Activated CD8-positive, alpha-beta T cell treated with anti-CD3 and anti-CD28 coated beads for 36 hours (primary cell): ENCODE measurements at regions of chr15 and their contacts with region 1.

Region 1: GRCh38 chr15:67254238-67255175 is at the starts of genes AAGAB and IQCH:
- DNase-seq: peak; percentile 97
- ATAC-seq: peak; percentile 96
- H3K4me3 Mint-ChIP-seq: peak within 1 kb of the TSS; percentile 96
- H3K27ac Mint-ChIP-seq: peak within 1 kb of the TSS; percentile 97
- H3K4me1 Mint-ChIP-seq: peaks cover 29% of the 10 kb centered on the region
- H3K27me3 Mint-ChIP-seq: peaks cover 2% of the 10 kb centered on the region
- CTCF ChIP-seq: no peak
- total RNA-seq, gene AAGAB: 42.6 to 51.2 TPM
- total RNA-seq, gene IQCH: 1.2 to 1.7 TPM

Region 2: DNA sequence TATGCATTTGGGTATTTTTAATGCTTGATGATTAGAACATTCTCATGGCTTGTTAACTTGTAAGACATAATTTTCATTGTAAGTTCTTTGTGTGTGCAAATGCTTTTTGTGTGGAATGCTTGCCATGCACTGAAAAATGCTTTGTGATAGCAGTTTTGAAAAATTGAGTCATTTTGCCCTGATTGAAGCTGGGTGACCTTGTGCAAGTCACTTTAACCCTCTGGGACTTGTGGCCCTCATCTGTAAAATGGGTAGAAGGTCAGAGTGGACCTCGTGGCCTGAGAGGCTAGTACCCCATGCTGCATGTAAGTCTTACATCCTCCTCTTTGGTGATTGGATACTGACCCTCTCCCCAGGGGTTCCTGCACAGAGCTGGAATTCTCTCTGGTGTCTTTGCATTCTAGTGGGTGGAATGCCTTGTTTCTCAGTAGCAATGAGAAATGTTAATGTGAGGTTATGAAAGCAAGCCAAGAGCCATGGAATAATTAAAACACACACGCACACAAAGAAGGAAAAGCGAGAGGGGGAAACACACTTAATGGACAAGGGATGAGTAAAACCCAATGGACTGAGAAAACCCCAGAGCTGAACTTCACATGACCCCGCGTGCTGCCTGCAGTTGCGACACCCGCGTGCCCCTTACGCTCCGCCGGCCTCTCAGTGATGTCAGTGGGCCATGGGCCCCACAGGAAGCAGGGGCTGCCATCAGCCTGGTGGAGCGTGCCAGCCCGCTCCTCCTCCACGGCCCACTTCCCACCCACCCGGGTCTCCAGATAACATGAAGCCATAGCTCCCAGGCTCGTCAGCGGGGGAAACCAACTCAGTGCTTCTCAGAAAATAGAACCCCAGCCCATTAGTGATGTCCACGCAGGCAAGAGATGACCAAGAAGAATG is 145.1 kb before region 1 on chr15:
- CTCF ChIA-PET with region 1: no interaction called
- POLR2A ChIA-PET with region 1: no interaction called
- intact Hi-C with region 1: loop called (anchors 10 kb)
- DNase-seq: peak; percentile 49
- ATAC-seq: peak; percentile 29
- H3K4me3 Mint-ChIP-seq: no peak overlapping the region
- H3K27ac Mint-ChIP-seq: peak overlapping the region; percentile 50
- H3K4me1 Mint-ChIP-seq: peaks cover 55% of the 10 kb centered on the region
- H3K27me3 Mint-ChIP-seq: no peaks in the 10 kb centered on the region
- CTCF ChIP-seq: no peak

Region 3: DNA sequence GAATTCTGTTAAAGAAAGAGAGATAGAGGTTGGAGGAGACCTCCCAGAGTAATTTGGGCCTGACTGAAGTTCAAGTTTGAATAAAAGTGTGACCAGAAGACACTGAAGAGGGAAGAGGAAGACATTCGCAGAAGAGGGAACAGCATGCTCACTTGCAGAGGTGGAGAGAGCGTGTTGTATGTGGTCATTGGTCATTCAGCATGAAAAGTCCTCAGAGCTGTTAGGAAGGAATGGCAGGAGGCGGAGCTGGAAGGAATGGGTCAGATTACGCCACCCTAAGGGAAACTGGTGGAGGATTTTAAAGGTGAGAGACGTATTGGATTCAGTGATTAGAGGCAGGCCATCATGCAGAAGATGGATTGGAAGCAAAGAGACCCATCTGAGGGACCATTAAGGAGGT is 41.7 kb after region 1 on chr15:
- CTCF ChIA-PET with region 1: no interaction called
- POLR2A ChIA-PET with region 1: no interaction called
- intact Hi-C with region 1: no loop called
- DNase-seq: no peak
- ATAC-seq: no peak
- H3K4me3 Mint-ChIP-seq: no peak overlapping the region
- H3K27ac Mint-ChIP-seq: no peak overlapping the region
- H3K4me1 Mint-ChIP-seq: no peaks in the 10 kb centered on the region
- H3K27me3 Mint-ChIP-seq: peaks cover 3% of the 10 kb centered on the region
- CTCF ChIP-seq: no peak